ENCODE measurements at regions of chr15 and their contacts with region 1.

Region 1: DNA sequence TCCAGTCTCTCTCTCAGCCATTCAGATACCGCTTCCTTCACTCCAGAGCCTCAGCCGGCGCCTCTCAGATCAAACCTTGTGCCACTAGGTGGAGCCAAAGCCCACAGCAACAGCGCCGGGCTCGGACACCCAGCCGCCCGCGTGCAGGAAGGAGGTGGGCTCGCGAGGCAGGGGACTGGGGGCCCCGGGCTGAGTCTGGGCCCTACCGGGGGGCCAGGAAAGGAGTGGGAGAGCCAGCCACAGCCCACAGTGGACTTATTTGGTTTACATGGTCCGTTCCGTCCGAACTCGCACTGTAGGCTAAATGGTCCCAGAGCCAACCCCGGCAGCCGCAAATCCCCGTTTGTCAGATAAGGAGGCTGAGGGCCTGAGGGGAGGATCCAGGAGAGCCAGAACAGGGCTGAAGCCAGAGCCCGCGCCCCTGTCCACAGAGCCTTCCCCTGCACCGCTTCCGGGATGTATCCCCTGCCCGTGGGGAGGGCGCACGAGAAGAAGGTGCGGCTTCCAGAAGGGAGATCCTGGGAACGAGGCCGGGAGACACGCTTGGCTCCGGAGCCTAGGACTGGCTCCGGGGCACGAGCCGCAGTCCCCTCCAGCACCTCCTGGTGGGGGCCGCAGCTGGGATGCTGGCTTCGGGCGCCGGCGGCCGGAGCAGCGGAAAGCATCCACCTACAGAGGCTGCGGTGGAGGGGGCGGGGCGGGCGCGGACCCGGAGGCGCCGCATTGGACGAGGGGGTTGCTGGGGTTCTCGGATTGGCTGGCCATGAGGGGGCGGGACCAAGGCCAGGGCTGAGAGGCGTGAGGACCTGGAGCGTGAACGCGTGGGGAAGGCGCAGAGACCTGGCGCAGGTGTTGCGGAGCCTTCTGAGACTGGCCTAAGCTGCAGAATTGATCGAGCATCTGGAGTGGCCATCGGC is 6.5 kb upstream of the CYP11A1 start:
- DNase-seq: peak; percentile 97
- ATAC-seq: peak; percentile 84
- H3K4me3 Mint-ChIP-seq: peak overlapping the region; percentile 76
- H3K27ac Mint-ChIP-seq: no peak overlapping the region
- H3K4me1 Mint-ChIP-seq: peaks cover 31% of the 10 kb centered on the region
- H3K27me3 Mint-ChIP-seq: peaks cover 7% of the 10 kb centered on the region

Region 2: GRCh38 chr15:74317820-74318375 is 56.1 kb before region 1 on chr15:
- CTCF ChIA-PET with region 1: no interaction called
- POLR2A ChIA-PET with region 1: no interaction called
- intact Hi-C with region 1: no loop called
- DNase-seq: no peak
- ATAC-seq: no peak
- H3K4me3 Mint-ChIP-seq: no peak overlapping the region
- H3K27ac Mint-ChIP-seq: no peak overlapping the region
- H3K4me1 Mint-ChIP-seq: peaks cover 20% of the 10 kb centered on the region
- H3K27me3 Mint-ChIP-seq: no peaks in the 10 kb centered on the region

Region 3: GRCh38 chr15:74438721-74439316 is 64.8 kb after region 1 on chr15:
- CTCF ChIA-PET with region 1: interaction called, 176 read pairs
- POLR2A ChIA-PET with region 1: interaction called, 13 read pairs
- intact Hi-C with region 1: loop called (anchors 1 to 2 kb)
- DNase-seq: peak; percentile 90
- ATAC-seq: peak; percentile 86
- H3K4me3 Mint-ChIP-seq: no peak overlapping the region
- H3K27ac Mint-ChIP-seq: no peak overlapping the region
- H3K4me1 Mint-ChIP-seq: peaks cover 30% of the 10 kb centered on the region
- H3K27me3 Mint-ChIP-seq: no peaks in the 10 kb centered on the region

Region 4: DNA sequence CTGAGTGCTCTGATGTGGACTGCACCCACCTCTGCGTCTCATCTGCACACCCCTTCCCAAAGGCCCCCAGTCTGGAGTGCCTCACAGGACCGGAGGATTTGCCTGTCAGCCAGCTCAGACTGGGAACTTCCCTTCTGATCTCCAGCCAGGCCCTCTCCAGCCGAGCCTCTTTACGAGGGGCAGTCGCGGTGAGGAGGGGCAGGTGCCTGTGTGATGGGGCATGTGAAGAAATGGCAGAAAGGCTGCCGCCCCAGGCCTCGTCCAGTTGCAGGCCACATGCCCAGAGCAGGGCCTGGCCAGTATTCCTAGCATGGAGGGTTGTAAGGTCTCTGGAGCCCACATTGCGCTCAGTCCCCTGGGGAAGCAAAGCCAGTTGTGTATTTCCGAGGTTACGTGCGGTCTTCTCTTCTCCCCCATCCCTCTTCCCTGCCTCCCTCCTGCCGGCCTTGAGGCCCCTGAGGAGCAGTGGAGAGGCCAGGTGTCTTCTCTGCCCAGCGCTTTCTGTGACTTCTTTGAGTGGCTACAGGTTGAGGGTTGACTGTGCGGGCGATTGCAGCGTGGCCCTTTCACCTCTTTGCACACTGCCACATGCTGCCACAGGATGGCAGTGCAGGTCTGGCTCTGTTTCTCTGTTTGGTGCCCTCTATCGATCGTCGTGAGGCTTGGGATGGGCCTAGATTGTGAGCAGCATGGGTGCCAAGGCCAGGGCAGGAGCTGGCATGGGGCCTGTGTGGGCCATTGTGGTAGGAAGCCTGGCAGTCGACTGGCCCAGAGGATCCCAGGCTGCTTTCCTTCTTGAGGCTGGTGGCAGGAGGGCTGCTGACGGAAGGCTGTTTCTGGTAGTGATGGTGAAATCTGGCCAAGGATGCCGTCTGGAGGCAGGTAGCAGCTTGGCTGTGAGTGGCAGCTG is 246.9 kb after region 1 on chr15:
- CTCF ChIA-PET with region 1: interaction called, 10 read pairs
- POLR2A ChIA-PET with region 1: interaction called, 3 read pairs
- intact Hi-C with region 1: loop called in 1 of 2 experiments (anchors 1 kb)
- DNase-seq: peak; percentile 90
- ATAC-seq: peak; percentile 97
- H3K4me3 Mint-ChIP-seq: no peak overlapping the region
- H3K27ac Mint-ChIP-seq: peak overlapping the region; percentile 80
- H3K4me1 Mint-ChIP-seq: peaks cover 46% of the 10 kb centered on the region
- H3K27me3 Mint-ChIP-seq: no peaks in the 10 kb centered on the region

Region 5: GRCh38 chr15:74787251-74788041 is 413.5 kb after region 1 on chr15:
- CTCF ChIA-PET with region 1: interaction called, 5 read pairs
- POLR2A ChIA-PET with region 1: no interaction called
- intact Hi-C with region 1: loop called in 1 of 2 experiments (anchors 5 kb)
- DNase-seq: peak; percentile 97
- ATAC-seq: peak; percentile 74
- H3K4me3 Mint-ChIP-seq: peak overlapping the region; percentile 89
- H3K27ac Mint-ChIP-seq: peak overlapping the region; percentile 100
- H3K4me1 Mint-ChIP-seq: peaks cover 58% of the 10 kb centered on the region
- H3K27me3 Mint-ChIP-seq: no peaks in the 10 kb centered on the region